Natural killer cell (primary cell): ENCODE measurements at regions of chr5 and their contacts with region 1.

Region 1: DNA sequence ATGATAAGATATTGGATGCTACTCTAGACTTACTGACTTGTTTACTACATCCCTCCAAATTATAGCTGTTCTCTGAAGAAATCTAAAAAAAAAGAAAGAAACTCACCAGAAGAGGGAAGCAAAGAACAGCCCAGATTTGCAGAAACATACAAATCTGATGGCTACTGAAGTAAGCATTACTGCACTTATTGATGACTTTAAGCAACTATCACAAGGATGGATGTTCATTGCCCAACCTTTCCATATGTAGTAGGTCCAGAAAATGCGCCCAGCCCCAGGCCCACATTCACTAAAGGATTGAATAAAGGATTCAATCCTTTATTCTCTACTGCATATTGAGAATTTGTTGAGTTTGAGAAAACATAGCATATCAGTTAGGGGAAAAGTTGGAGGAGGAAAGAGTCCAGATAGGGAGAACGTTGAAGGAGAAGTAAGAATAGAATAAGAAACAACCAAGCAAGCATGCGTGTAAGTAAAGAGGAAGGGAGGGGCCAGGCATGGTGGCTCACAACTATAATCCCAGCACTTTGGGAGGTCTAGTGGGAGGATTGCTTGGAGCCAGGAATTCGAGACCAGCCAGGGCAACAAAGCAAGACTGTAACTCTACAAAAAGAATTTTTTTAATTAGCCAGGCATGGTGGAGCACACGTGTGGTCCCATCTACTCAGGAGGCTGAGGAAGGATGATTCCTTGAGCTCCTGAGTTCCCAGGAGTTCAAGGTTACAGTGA is 33.8 kb upstream of the DTWD2 start:
- DNase-seq: peak in 1 of 2 donors; percentile 62
- ATAC-seq: peak in 1 of 3 donors; percentile 30
- H3K4me3 ChIP-seq: no peak overlapping the region
- H3K4me3 Mint-ChIP-seq: no peak overlapping the region
- H3K27ac ChIP-seq: no peak overlapping the region
- H3K27ac Mint-ChIP-seq: no peak overlapping the region
- H3K4me1 ChIP-seq: peaks cover 2% of the 10 kb centered on the region
- H3K4me1 Mint-ChIP-seq: no peaks in the 10 kb centered on the region
- H3K27me3 ChIP-seq: no peaks in the 10 kb centered on the region
- H3K27me3 Mint-ChIP-seq: no peaks in the 10 kb centered on the region
- CTCF ChIP-seq: peak; percentile 22

Region 2: DNA sequence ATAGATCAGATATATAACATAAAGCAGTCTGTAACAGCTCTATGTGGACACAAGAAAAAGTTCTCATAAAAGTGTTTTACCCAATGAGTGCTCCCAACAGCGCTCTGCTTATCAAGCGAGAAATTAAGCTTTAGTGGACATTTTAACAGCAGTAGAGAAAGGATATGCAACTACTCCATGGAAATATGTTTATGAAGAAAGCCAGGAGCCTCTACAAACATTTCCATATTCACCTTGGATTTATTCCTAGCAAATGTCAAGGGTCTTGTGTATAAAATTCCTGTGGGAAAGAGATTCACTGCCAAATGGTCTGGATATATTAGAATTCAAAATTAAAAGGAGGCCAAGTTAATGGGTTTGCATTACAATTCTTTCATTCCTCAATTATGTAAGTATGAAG is 100.3 kb before region 1 on chr5:
- intact Hi-C with region 1: no loop called
- DNase-seq: no peak
- ATAC-seq: no peak
- H3K4me3 ChIP-seq: no peak overlapping the region
- H3K4me3 Mint-ChIP-seq: no peak overlapping the region
- H3K27ac ChIP-seq: no peak overlapping the region
- H3K27ac Mint-ChIP-seq: no peak overlapping the region
- H3K4me1 ChIP-seq: no peaks in the 10 kb centered on the region
- H3K4me1 Mint-ChIP-seq: no peaks in the 10 kb centered on the region
- H3K27me3 ChIP-seq: no peaks in the 10 kb centered on the region
- H3K27me3 Mint-ChIP-seq: no peaks in the 10 kb centered on the region
- CTCF ChIP-seq: no peak

Region 3: GRCh38 chr5:119355685-119356611 is 333.8 kb after region 1 on chr5 and contains the start of gene TNFAIP8:
- intact Hi-C with region 1: no loop called
- DNase-seq: peak; percentile 37 to 74
- ATAC-seq: peak; percentile 63 to 82 (median 81)
- H3K4me3 ChIP-seq: peak within 1 kb of the TSS; percentile 50
- H3K4me3 Mint-ChIP-seq: peak within 1 kb of the TSS; percentile 80
- H3K27ac ChIP-seq: peak within 1 kb of the TSS; percentile 64
- H3K27ac Mint-ChIP-seq: peak within 1 kb of the TSS; percentile 55 to 79
- H3K4me1 ChIP-seq: peaks cover 36% of the 10 kb centered on the region
- H3K4me1 Mint-ChIP-seq: peaks cover 87 to 89% of the 10 kb centered on the region in 2 donors
- H3K27me3 ChIP-seq: no peaks in the 10 kb centered on the region
- H3K27me3 Mint-ChIP-seq: no peaks in the 10 kb centered on the region
- CTCF ChIP-seq: no peak
- total RNA-seq, gene TNFAIP8: 47.6 to 87.5 (median 76.3) TPM

Region 4: DNA sequence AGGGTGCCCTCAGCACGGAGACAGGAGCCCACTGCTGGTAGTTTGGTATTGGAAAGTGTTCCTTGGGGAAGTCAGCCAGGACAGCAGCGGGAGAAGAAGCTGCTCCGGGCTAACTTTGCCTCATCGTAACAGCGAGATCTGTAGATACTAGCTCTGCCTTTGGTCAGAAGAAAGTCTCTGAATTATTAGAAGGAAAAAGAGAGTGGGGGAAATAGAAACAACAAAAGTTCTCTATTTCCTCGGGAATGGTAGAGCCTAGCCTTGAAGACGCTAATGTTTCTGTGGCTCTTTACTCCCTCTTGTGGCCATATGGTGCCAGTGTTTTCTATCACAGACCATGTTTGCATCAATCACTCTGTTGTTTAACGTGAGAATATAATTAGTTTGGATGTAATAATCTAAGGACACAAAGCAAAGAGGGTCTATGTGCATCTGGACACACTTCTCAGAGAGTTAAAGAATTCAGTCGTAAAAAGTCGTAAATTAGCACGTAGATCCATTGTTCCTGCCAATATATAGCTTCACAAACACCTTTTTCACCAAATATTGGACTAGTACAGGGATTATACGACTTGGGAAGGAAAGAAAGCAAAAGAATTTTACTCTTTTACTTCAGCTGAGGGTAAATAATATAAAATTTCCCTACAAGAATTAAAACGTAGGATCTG is 389.9 kb after region 1 on chr5:
- intact Hi-C with region 1: loop called (anchors 1 kb)
- DNase-seq: peak; percentile 21 to 88
- ATAC-seq: peak; percentile 84 to 98 (median 96)
- H3K4me3 ChIP-seq: peak overlapping the region; percentile 38
- H3K4me3 Mint-ChIP-seq: peak overlapping the region; percentile 94
- H3K27ac ChIP-seq: no peak overlapping the region
- H3K27ac Mint-ChIP-seq: peak overlapping the region in 1 of 2 donors; percentile 85
- H3K4me1 ChIP-seq: peaks cover 8% of the 10 kb centered on the region
- H3K4me1 Mint-ChIP-seq: peaks cover 9 to 10% of the 10 kb centered on the region in 2 donors
- H3K27me3 ChIP-seq: no peaks in the 10 kb centered on the region
- H3K27me3 Mint-ChIP-seq: peaks cover 0 to 4% of the 10 kb centered on the region in 2 donors
- CTCF ChIP-seq: peak; percentile 94

Region 5: GRCh38 chr5:119470851-119471451 is 448.8 kb after region 1 on chr5:
- intact Hi-C with region 1: no loop called
- DNase-seq: peak in 1 of 2 donors; percentile 41
- ATAC-seq: no peak
- H3K4me3 ChIP-seq: no peak overlapping the region
- H3K4me3 Mint-ChIP-seq: no peak overlapping the region
- H3K27ac ChIP-seq: no peak overlapping the region
- H3K27ac Mint-ChIP-seq: no peak overlapping the region
- H3K4me1 ChIP-seq: no peaks in the 10 kb centered on the region
- H3K4me1 Mint-ChIP-seq: peaks cover under 1 to 20% of the 10 kb centered on the region in 2 donors
- H3K27me3 ChIP-seq: no peaks in the 10 kb centered on the region
- H3K27me3 Mint-ChIP-seq: no peaks in the 10 kb centered on the region
- CTCF ChIP-seq: no peak